Caco-2 (cell line): ENCODE measurements at regions of chr19 and their contacts with region 1.

Region 1: DNA sequence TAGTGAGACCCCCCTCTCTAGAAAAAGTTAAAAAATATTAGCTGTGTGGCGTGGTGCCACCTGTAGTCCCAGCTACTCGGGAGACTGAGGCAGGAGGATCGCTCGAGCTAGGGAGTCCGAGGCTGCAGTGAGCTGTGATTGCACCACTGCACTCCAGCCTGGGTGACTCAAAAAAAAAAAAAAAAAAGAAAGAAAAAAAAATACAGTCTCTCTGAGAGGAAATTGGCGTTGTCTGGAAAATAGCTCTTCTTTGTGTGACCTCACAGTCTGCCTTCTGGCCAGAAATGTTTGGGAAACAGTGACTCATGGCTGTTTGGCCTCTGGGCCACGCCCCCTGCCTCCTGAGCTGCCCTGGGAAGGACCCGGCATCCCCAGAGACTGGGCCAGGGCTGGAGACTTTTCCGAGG is 10.7 kb downstream of the MARCHF2 start:
- DNase-seq: peak; percentile 79 to 86
- H3K4me3 ChIP-seq: no peak overlapping the region
- H3K4me3 Mint-ChIP-seq: no peak overlapping the region
- H3K27ac Mint-ChIP-seq: peak overlapping the region; percentile 45
- H3K4me1 ChIP-seq: peaks cover 11% of the 10 kb centered on the region; the same call in 1 of the 2 replicates
- H3K4me1 Mint-ChIP-seq: no peaks in the 10 kb centered on the region
- H3K27me3 ChIP-seq: no peaks in the 10 kb centered on the region
- H3K27me3 Mint-ChIP-seq: no peaks in the 10 kb centered on the region
- CTCF ChIP-seq: no peak

Region 2: GRCh38 chr19:8444645-8445487 is 21.0 kb after region 1 on chr19 and contains the start of gene HNRNPM:
- CTCF ChIA-PET with region 1: interaction called, 5 read pairs
- POLR2A ChIA-PET with region 1: interaction called, 13 read pairs
- intact Hi-C with region 1: no loop called
- DNase-seq: peak; percentile 98 to 99
- H3K4me3 ChIP-seq: peak within 1 kb of the TSS; percentile 81
- H3K4me3 Mint-ChIP-seq: peak within 1 kb of the TSS; percentile 94
- H3K27ac Mint-ChIP-seq: peak within 1 kb of the TSS; percentile 98
- H3K4me1 ChIP-seq: peaks cover 15% of the 10 kb centered on the region
- H3K4me1 Mint-ChIP-seq: peaks cover 8% of the 10 kb centered on the region
- H3K27me3 ChIP-seq: no peaks in the 10 kb centered on the region
- H3K27me3 Mint-ChIP-seq: no peaks in the 10 kb centered on the region
- CTCF ChIP-seq: no peak
- total RNA-seq, gene HNRNPM: 271 and 286 TPM in 2 replicates

Region 3: DNA sequence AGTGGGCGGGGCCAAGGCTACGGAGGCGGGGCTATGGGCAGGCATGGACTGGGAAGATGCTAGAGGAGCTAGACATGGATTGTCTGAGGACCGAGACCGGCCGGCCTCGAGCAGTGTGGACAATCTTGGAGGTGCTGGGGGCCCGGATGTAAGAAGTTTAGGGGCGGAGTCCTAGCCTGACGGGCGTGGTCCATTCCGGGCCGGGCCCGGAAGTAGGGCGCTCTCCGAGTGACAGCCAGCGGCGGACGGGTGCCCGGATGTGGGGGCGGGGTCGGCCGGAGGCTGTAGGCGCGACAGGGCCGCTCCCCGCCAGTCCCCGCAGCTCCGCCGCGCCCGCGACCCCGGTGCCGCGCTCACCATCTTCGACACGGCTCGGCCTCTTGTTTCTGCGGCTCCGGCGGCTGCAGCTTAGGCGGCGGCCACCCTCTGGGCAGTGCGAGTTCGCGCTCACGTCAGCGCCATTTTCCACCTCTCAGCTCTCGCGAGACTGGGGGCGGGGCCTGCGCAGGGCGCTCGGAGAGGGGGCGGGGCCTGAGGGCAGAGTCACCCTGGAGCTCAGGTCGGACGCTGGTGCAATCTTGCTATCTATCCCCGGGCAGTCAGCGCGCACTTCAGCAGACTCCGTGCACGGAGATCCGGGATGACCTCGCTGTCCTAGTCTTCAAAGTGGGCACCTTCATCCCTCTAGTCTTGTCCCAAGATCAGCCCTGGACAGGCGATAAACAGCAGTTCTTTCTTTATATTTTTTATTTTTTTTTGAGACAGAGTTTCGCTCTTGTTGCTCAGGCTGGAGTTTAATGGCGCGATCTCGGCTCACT is 90.1 kb after region 1 on chr19 and contains the start of gene ZNF414:
- CTCF ChIA-PET with region 1: interaction called, 17 read pairs
- POLR2A ChIA-PET with region 1: interaction called, 5 read pairs
- intact Hi-C with region 1: no loop called
- DNase-seq: peak; percentile 96 to 98
- H3K4me3 ChIP-seq: peak within 1 kb of the TSS; percentile 86
- H3K4me3 Mint-ChIP-seq: peak within 1 kb of the TSS; percentile 76
- H3K27ac Mint-ChIP-seq: peak within 1 kb of the TSS; percentile 91
- H3K4me1 ChIP-seq: peaks cover 12% of the 10 kb centered on the region; the same call in 1 of the 2 replicates
- H3K4me1 Mint-ChIP-seq: no peaks in the 10 kb centered on the region
- H3K27me3 ChIP-seq: no peaks in the 10 kb centered on the region
- H3K27me3 Mint-ChIP-seq: no peaks in the 10 kb centered on the region
- CTCF ChIP-seq: no peak
- total RNA-seq, gene ZNF414: 17.2 and 25.0 TPM in 2 replicates